Activated CD4-positive, alpha-beta memory T cell treated with anti-CD3 and anti-CD28 coated beads for 36 hours (primary cell): ENCODE measurements at regions of chr1 and their contacts with region 1.

Region 1: GRCh38 chr1:206612129-206612876 is at the start of gene EIF2D:
- DNase-seq: peak; percentile 96
- H3K4me3 Mint-ChIP-seq: peak within 1 kb of the TSS; percentile 96
- H3K27ac Mint-ChIP-seq: peak within 1 kb of the TSS; percentile 90
- H3K4me1 Mint-ChIP-seq: peaks cover 32% of the 10 kb centered on the region
- H3K27me3 Mint-ChIP-seq: no peaks in the 10 kb centered on the region
- total RNA-seq, gene EIF2D: 84.6 to 87.5 TPM

Region 2: DNA sequence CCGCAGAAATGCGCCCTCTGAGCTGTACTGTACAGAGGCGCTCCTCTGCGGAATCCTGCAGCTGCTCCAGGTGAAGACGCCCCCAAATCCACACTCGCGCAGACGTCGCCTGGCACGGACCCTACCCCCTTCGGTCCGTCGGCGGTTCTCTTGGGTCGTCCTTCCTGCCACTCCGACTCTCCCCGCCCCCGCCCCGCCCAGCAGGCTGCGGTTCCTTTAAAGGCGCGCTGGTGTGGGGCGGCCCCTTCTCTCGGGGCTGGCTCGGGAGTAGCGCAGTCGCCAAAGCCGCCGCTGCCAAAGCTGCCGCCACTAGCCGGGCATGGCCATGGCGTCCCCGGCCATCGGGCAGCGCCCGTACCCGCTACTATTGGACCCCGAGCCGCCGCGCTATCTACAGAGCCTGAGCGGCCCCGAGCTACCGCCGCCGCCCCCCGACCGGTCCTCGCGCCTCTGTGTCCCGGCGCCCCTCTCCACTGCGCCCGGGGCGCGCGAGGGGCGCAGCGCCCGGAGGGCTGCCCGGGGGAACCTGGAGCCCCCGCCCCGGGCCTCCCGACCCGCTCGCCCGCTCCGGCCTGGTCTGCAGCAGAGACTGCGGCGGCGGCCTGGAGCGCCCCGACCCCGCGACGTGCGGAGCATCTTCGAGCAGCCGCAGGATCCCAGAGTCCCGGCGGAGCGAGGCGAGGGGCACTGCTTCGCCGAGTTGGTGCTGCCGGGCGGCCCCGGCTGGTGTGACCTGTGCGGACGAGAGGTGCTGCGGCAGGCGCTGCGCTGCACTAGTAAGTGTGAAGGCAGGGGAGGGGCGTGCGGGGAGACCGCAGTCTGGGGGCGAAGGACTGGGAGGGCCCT is 104.8 kb before region 1 on chr1 and contains the start of gene RASSF5:
- CTCF ChIA-PET with region 1: interaction called, 3 read pairs
- POLR2A ChIA-PET with region 1: no interaction called
- intact Hi-C with region 1: loop called (anchors 1 kb)
- DNase-seq: peak; percentile 90
- H3K4me3 Mint-ChIP-seq: peak within 1 kb of the TSS; percentile 71
- H3K27ac Mint-ChIP-seq: peak within 1 kb of the TSS; percentile 30
- H3K4me1 Mint-ChIP-seq: peaks cover 47% of the 10 kb centered on the region
- H3K27me3 Mint-ChIP-seq: peaks cover 26% of the 10 kb centered on the region
- total RNA-seq, gene RASSF5: 203 TPM

Region 3: DNA sequence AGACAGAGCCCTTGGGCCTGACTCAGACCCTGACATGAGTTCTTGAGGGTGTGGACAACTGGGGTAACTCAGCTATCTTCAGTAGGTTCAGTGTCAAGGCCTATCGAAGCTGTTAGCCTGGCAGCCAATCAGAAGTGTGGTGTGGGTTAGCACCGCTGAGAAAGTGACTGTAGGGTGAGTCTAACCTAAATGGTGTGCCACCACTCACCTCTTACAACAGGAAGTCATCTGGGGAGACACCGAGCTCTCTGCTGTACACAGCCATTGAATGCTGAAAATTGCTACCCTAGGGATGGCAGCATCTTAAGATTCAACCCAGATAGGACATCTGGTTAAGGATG is 60.3 kb before region 1 on chr1:
- CTCF ChIA-PET with region 1: interaction called, 37 read pairs
- POLR2A ChIA-PET with region 1: interaction called, 4 read pairs
- intact Hi-C with region 1: loop called (anchors 1 kb)
- DNase-seq: peak; percentile 92
- H3K4me3 Mint-ChIP-seq: peak overlapping the region; percentile 70
- H3K27ac Mint-ChIP-seq: peak overlapping the region; percentile 91
- H3K4me1 Mint-ChIP-seq: peaks cover 53% of the 10 kb centered on the region
- H3K27me3 Mint-ChIP-seq: no peaks in the 10 kb centered on the region

Region 4: DNA sequence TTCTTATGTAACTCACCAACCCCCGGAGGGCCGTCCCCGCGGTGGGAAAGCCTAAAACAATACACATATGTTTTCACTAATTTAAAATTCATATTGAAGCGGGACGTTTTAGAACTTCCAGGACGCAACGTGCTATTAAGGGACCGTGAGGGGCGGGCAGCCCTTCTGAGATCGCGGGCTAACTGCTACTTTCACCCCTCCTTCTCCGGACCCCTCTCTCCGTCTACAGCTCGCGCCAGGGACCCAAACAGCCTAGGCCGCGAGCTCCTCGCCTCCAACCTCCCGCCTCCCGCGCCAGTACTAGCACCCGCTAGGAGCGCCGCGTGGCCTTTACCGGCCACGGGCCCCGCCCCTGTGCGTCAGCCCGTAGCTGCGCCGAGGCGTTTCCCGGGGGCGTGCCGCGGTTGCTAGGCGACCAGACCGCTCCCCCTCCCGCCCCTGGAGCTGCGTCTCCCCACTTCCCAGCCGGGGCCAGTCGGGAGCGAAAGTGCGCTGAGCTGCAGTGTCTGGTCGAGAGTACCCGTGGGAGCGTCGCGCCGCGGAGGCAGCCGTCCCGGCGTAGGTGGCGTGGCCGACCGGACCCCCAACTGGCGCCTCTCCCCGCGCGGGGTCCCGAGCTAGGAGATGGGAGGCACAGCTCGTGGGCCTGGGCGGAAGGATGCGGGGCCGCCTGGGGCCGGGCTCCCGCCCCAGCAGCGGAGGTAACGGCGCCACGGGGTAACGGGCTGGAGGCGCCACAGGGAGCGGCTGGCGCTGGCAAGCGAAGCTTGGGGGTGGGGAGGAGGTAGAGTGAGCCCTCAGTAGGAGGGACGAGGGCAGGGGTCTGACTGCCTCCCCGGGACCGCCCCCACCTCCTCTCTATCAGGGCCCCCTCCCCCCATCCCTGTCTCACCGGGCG is 23.0 kb after region 1 on chr1 and contains the start of gene DYRK3:
- CTCF ChIA-PET with region 1: interaction called, 55 read pairs
- POLR2A ChIA-PET with region 1: interaction called, 15 read pairs
- intact Hi-C with region 1: loop called (anchors 1 kb)
- DNase-seq: peak; percentile 96
- H3K4me3 Mint-ChIP-seq: peak within 1 kb of the TSS; percentile 80
- H3K27ac Mint-ChIP-seq: peak within 1 kb of the TSS; percentile 80
- H3K4me1 Mint-ChIP-seq: peaks cover 25% of the 10 kb centered on the region
- H3K27me3 Mint-ChIP-seq: peaks cover 5% of the 10 kb centered on the region
- total RNA-seq, gene DYRK3: 10.1 to 11.4 TPM

Region 5: DNA sequence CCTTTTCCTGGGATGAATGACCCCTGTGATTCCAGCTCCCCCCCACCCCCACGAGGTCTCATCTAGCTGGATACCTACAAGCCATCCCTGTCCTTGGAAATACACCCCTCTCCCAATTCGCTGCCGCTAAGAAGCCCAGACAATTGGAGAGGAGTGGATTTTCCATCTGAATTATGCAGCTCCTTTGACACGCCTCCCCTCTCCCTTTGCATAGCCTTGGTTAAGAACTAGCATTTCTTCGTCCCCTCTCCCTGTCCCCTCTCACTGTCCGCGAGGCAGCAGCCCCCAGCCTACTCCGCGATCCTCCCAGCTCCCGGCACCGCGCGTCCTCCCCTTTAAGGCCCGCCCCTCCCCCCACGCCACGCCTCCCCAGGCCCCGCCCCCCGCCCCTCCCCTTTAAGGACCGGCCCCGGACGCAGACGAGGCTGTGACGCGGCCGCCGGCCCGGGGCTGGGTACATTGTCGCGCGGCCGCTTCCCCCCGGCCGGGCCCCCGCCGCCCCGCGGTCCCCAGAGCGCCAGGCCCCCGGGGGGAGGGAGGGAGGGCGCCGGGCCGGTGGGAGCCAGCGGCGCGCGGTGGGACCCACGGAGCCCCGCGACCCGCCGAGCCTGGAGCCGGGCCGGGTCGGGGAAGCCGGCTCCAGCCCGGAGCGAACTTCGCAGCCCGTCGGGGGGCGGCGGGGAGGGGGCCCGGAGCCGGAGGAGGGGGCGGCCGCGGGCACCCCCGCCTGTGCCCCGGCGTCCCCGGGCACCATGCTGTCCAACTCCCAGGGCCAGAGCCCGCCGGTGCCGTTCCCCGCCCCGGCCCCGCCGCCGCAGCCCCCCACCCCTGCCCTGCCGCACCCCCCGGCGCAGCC is 72.4 kb after region 1 on chr1 and contains the start of gene MAPKAPK2:
- CTCF ChIA-PET with region 1: interaction called, 6 read pairs
- POLR2A ChIA-PET with region 1: no interaction called
- intact Hi-C with region 1: loop called (anchors 2 kb)
- DNase-seq: peak; percentile 83
- H3K4me3 Mint-ChIP-seq: peak within 1 kb of the TSS; percentile 90
- H3K27ac Mint-ChIP-seq: peak within 1 kb of the TSS; percentile 95
- H3K4me1 Mint-ChIP-seq: peaks cover 58% of the 10 kb centered on the region
- H3K27me3 Mint-ChIP-seq: peaks cover 1% of the 10 kb centered on the region
- total RNA-seq, gene MAPKAPK2: 96.9 to 97.4 TPM